Activated CD8-positive, alpha-beta T cell treated with anti-CD3 and anti-CD28 coated beads, Interleukin-2, amount 10 ng/mL, durations not matched to agents 7 days and 5 days (primary cell): ENCODE measurements at regions of chr20 and their contacts with region 1.

Region 1: GRCh38 chr20:1734269-1734858 is 76.8 kb upstream of the SIRPG start:
- DNase-seq: peak; percentile 62
- ATAC-seq: peak; percentile 88
- H3K4me3 Mint-ChIP-seq: no peak overlapping the region
- H3K27ac Mint-ChIP-seq: no peak overlapping the region
- H3K4me1 Mint-ChIP-seq: peaks cover 37% of the 10 kb centered on the region
- H3K27me3 Mint-ChIP-seq: no peaks in the 10 kb centered on the region

Region 2: DNA sequence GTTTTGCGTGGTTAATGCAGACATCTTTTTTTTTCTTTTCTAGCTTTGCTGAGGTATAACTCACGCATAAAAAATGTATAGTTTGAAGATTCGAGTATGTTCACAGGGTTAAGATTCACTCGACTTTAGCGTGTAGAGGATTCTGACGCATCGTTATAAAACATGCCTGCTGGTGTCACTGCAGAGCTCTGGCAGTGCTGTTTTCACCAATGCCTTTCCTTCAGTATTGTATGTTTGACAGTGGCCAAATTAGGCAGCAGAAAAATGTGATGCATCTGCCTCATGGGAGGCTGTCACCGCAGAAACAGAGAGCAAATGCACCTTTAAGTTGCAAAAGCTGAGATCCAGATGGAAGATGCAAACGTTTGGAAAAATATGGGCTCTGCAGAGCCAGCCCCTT is 225.1 kb before region 1 on chr20:
- CTCF ChIA-PET with region 1: interaction called, 44 read pairs
- POLR2A ChIA-PET with region 1: no interaction called
- DNase-seq: peak; percentile 62
- ATAC-seq: peak; percentile 51
- H3K4me3 Mint-ChIP-seq: no peak overlapping the region
- H3K27ac Mint-ChIP-seq: no peak overlapping the region
- H3K4me1 Mint-ChIP-seq: no peaks in the 10 kb centered on the region
- H3K27me3 Mint-ChIP-seq: peaks cover 32% of the 10 kb centered on the region

Region 3: DNA sequence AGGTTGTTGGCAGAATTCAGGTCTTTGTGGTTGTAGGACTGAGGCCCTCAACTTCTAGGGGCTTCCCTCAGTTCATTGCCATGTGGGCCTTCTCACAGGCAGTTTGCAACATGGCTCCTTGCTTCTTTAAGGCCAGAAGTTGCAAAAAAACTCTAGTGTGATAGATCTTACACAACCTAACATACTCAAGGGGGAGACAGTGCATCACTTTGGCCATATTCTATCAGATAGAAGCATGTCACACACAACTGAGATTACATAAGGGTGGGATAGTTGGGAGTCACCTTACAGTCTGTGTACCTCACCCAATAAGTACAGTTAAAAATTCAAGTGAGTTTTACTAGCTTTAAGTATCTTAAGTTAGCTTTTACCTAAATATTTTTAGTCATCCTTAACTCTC is 178.4 kb before region 1 on chr20:
- CTCF ChIA-PET with region 1: interaction called, 18 read pairs
- POLR2A ChIA-PET with region 1: no interaction called
- DNase-seq: no peak
- ATAC-seq: no peak
- H3K4me3 Mint-ChIP-seq: no peak overlapping the region
- H3K27ac Mint-ChIP-seq: no peak overlapping the region
- H3K4me1 Mint-ChIP-seq: peaks cover 4% of the 10 kb centered on the region
- H3K27me3 Mint-ChIP-seq: no peaks in the 10 kb centered on the region

Region 4: GRCh38 chr20:1657556-1658334 is 76.6 kb before region 1 on chr20 and contains the start of gene SIRPG:
- CTCF ChIA-PET with region 1: interaction called, 11 read pairs
- POLR2A ChIA-PET with region 1: interaction called, 8 read pairs
- DNase-seq: peak; percentile 77
- ATAC-seq: peak; percentile 66
- H3K4me3 Mint-ChIP-seq: peak within 1 kb of the TSS; percentile 93
- H3K27ac Mint-ChIP-seq: peak within 1 kb of the TSS; percentile 95
- H3K4me1 Mint-ChIP-seq: peaks cover 82% of the 10 kb centered on the region
- H3K27me3 Mint-ChIP-seq: no peaks in the 10 kb centered on the region
- total RNA-seq, gene SIRPG: 112 to 123 TPM

Region 5: DNA sequence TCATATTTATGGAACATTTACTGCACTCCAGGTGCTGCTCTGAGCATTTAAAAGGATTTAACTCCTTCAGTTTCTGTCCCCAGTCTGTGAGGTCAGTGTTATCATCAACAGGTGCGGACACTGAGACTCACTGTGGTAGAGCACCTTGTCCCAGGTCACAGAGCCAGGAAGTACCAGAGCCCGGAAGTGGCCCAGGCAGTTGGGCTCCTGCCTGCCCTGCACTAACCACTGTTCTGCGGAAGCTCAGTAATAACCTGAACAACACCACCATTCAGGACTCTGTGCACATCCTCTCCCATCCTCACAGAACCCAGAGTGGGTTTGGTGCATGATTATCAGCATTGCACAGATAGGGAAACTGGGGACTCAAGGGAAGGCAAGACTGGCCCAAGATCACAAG is 60.0 kb before region 1 on chr20:
- CTCF ChIA-PET with region 1: interaction called, 49 read pairs
- POLR2A ChIA-PET with region 1: interaction called, 4 read pairs
- DNase-seq: peak; percentile 81
- ATAC-seq: peak; percentile 86
- H3K4me3 Mint-ChIP-seq: peak overlapping the region; percentile 52
- H3K27ac Mint-ChIP-seq: peak overlapping the region; percentile 87
- H3K4me1 Mint-ChIP-seq: peaks cover 99% of the 10 kb centered on the region
- H3K27me3 Mint-ChIP-seq: no peaks in the 10 kb centered on the region

Region 6: GRCh38 chr20:1790386-1790785 is 56.0 kb after region 1 on chr20:
- CTCF ChIA-PET with region 1: no interaction called
- POLR2A ChIA-PET with region 1: no interaction called
- DNase-seq: no peak
- ATAC-seq: no peak
- H3K4me3 Mint-ChIP-seq: no peak overlapping the region
- H3K27ac Mint-ChIP-seq: no peak overlapping the region
- H3K4me1 Mint-ChIP-seq: no peaks in the 10 kb centered on the region
- H3K27me3 Mint-ChIP-seq: peaks cover 50% of the 10 kb centered on the region

Region 7: GRCh38 chr20:1838556-1839279 is 104.4 kb after region 1 on chr20:
- CTCF ChIA-PET with region 1: no interaction called
- POLR2A ChIA-PET with region 1: no interaction called
- DNase-seq: no peak
- ATAC-seq: no peak
- H3K4me3 Mint-ChIP-seq: no peak overlapping the region
- H3K27ac Mint-ChIP-seq: no peak overlapping the region
- H3K4me1 Mint-ChIP-seq: no peaks in the 10 kb centered on the region
- H3K27me3 Mint-ChIP-seq: peaks cover 2% of the 10 kb centered on the region